Vagina (tissue), 2 donors: ENCODE measurements at regions of chr19 and their contacts with region 1.

Region 1: DNA sequence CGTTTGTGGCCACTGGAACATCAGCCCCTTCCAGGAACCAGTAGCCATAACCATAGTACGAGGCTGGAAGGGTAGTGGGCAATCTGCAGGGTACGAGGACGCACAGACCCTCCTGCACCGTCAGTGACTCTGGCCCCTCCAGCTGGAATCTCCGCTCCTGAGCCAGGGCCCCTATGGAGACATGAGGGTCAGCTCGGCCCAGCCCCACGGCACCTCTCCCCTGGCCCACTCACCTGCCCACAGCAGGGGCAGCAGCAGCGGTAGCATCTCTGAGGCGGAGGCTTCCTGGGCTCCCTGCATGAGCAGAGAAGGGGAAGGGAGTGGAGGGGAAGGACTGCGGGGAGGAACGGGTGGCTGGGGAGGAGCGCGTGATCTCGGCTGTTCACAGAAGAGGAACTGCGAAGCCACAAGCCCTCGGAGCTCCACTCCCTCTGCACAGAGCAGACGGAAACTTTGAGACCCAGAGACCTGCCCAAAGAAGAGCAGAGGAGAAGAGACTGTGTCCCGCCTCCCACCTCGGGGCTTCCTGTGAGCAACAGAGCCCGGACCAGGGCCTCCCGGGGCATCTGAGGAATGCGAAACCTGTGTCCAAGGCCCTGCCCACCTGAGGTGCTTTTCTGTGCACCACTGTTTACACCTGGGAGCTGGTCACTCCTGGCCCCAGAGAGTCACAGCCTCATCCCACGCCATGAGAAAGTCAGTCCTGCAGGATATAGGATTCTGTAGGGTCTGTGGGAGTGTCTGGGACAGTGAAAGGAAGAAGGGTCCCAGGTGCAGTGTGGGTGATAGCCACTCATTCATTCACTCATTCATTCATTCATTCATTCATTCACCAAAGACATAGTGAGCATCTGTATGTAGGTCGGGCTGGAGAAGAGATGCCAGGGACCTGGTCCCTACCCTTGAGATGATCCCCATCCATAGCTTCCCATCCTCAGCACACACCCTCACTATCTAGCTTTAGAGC is at the start of gene SIGLEC6:
- DNase-seq: no peak
- H3K4me3 ChIP-seq: no peak within 1 kb of the TSS
- H3K27ac ChIP-seq: no peak within 1 kb of the TSS
- H3K4me1 ChIP-seq: no peaks in the 10 kb centered on the region
- H3K27me3 ChIP-seq: no peaks in the 10 kb centered on the region
- CTCF ChIP-seq: no peak
- POLR2A ChIP-seq: no peak
- total RNA-seq, gene SIGLEC6: 1.2 TPM

Region 2: GRCh38 chr19:51456541-51457290 is 74.9 kb before region 1 on chr19:
- intact Hi-C with region 1: no loop called
- DNase-seq: no peak
- H3K4me3 ChIP-seq: no peak overlapping the region
- H3K27ac ChIP-seq: no peak overlapping the region
- H3K4me1 ChIP-seq: no peaks in the 10 kb centered on the region
- H3K27me3 ChIP-seq: no peaks in the 10 kb centered on the region
- CTCF ChIP-seq: no peak
- POLR2A ChIP-seq: no peak

Region 3: DNA sequence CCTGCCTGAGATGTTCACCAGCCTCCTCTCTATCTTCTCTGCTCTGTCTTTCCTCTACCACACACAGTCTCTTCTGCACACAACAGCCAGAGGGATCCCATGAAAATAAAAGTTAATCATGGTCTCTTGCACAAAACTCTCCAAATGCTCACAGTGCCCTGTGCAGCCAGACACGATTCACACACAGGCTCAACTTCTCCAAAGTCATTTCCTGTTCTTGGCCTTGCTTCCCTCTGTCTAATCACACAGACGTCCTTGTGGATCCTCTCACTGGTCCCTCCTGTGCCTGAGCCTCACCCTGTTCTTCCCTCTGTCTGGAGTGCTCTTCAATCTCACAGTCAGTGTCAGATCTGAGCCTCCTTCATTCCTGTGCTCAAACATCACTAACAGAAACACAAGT is 37.9 kb before region 1 on chr19:
- intact Hi-C with region 1: loop called (anchors 5 kb)
- DNase-seq: no peak
- H3K4me3 ChIP-seq: no peak overlapping the region
- H3K27ac ChIP-seq: no peak overlapping the region
- H3K4me1 ChIP-seq: no peaks in the 10 kb centered on the region
- H3K27me3 ChIP-seq: no peaks in the 10 kb centered on the region
- CTCF ChIP-seq: no peak
- POLR2A ChIP-seq: no peak